Gastrocnemius medialis (tissue), 4 donors: ENCODE measurements at regions of chr12 and their contacts with region 1.

Region 1: DNA sequence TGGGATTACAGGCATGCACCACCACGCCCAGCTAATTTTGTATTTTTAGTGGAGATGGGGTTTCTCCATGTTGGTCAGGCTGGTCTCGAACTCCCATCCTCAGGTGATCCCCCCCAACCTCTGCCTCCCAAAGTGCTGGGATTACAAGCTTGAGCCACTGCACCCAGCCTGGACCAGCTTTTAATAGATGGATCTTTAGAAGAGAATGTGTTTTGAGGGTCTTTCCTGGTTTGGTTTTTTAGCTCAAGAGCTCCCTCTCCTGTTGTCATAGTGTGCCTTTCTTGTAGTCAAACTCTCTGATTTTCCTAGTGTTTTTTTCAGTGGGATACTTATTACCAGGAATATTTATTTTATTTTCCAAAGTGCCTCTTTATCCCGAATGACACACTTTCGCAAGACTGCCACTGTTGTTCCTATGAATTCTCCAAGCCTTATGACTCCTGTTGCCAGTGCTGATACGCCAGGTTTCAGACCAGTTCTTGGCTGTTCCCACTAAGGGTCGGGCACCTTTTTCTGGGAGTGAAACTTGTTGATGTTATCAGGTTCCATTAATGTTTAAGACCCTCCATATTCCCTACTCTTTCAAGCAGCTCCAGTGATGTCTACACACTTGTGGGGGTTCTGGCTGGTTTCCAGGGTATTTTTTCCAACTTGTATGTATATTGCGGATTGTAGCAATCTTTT is 31.5 kb upstream of the LIMA1 start:
- DNase-seq: no peak
- ATAC-seq: no peak
- H3K4me3 ChIP-seq: no peak overlapping the region
- H3K27ac ChIP-seq: no peak overlapping the region
- H3K4me1 ChIP-seq: peaks cover 0 to 12% of the 10 kb centered on the region in 2 donors
- H3K27me3 ChIP-seq: no peaks in the 10 kb centered on the region
- CTCF ChIP-seq: peak; percentile 25 to 57 (median 43)
- POLR2A ChIP-seq: no peak

Region 2: DNA sequence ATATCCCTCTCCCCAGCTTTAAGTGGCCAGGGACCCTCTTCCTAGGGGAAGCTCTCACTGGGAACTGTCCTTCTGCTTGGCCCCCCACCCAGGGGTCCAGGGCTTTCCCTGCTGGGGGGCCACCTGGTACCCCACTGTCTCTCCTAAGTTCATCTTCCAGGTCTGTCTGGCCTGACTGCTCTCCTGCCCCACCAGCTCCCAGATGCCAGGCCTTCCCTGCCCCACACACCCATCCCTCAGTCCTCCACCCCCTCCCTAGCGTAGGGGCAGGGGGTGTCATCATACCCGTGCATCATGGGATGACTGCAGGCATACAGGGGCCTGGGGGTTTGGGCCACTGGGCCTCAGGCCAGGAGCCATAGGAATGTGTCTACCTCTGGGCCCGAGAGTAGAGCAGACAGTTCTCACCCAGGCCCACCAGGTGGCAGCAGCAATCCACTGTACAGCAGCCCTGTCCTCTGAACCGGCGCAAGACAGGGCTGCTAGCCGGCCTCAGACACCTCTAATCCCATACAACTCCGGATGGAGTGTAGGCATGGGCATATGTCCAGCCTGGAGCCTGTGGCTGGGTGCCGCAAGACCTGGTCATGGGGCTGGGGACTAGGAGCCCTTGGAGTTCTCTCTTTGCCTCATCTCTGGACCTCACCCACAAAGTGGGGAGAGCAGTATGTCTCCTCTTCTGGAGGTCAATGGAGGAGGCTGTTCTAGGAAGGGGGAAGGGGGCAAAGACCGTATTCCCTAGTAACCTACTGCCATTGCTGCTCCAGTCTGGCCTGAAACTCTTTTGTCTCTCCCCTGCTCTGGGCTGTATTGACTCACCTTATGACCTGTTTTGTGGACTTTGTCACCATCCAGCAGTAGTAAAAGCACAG is 239.6 kb before region 1 on chr12:
- in situ Hi-C with region 1: loop called in 3 of 4 experiments (anchors 10 to 25 kb)
- intact Hi-C with region 1: loop called (anchors 10 kb)
- DNase-seq: peak; percentile 62 to 77
- ATAC-seq: peak; percentile 88 to 89
- H3K4me3 ChIP-seq: no peak overlapping the region
- H3K27ac ChIP-seq: no peak overlapping the region
- H3K4me1 ChIP-seq: peaks cover 0 to 3% of the 10 kb centered on the region in 2 donors
- H3K27me3 ChIP-seq: no peaks in the 10 kb centered on the region
- CTCF ChIP-seq: peak; percentile 94 to 97 (median 95)
- POLR2A ChIP-seq: no peak

Region 3: GRCh38 chr12:50084775-50085614 is 229.8 kb before region 1 on chr12 and contains the start of gene SMARCD1:
- in situ Hi-C with region 1: loop called in 2 of 4 experiments (anchors 25 kb)
- intact Hi-C with region 1: loop called (anchors 10 kb)
- DNase-seq: peak; percentile 86 to 88
- ATAC-seq: peak; percentile 81 to 91
- H3K4me3 ChIP-seq: peak within 1 kb of the TSS; percentile 81 to 95 (median 88)
- H3K27ac ChIP-seq: peak within 1 kb of the TSS; percentile 92 to 99 (median 96)
- H3K4me1 ChIP-seq: peaks cover 13 to 14% of the 10 kb centered on the region in 2 donors
- H3K27me3 ChIP-seq: no peaks in the 10 kb centered on the region
- CTCF ChIP-seq: peak in 2 of 5 experiments; percentile 26 to 41
- POLR2A ChIP-seq: peak in 1 of 2 donors; percentile 37
- total RNA-seq, gene SMARCD1: 16.9 to 27.3 (median 20.1) TPM

Region 4: DNA sequence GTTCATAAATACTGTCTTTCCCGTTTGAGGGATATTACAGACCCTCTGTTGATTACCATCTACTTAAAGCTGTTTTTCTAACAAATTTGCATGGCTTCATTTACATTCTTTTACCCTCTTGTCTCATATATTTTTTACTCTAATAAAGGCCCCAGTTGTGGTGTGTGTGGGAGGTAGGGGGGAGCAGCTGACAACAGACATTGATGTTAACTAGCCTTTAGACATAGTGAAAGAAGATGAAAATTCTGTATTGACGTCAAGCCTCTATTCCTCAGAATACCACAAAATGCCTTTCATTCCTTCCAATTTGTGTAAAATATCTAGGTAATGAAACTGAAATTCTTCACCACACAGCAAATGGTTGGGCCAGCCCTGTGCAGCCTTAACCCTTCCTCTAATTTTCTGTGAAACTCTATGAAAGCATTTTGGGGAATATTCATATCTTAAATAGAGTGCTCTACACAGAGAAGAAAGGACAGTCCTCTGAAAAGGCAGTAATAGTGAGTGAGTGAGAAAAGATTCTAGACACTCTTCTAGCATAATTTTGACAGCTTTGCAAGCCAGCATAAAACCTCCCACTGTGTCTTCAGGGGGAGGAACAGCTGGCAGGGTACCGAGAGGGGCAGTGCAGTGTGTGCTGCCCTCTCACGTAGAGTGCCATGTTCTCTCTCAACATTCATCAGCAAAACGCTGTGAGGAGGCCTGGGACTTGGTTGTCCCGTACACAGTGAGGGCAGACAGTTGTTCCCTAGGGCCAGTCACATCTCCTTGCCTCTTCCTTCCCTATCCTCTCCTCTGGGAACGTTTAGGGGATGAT is 127.5 kb before region 1 on chr12:
- in situ Hi-C with region 1: no loop called
- intact Hi-C with region 1: loop called (anchors 5 kb)
- DNase-seq: no peak
- ATAC-seq: no peak
- H3K4me3 ChIP-seq: no peak overlapping the region
- H3K27ac ChIP-seq: peak overlapping the region; percentile 1 to 35 (median 16)
- H3K4me1 ChIP-seq: peaks cover 5 to 22% of the 10 kb centered on the region in 2 donors
- H3K27me3 ChIP-seq: no peaks in the 10 kb centered on the region
- CTCF ChIP-seq: no peak
- POLR2A ChIP-seq: no peak

Region 5: GRCh38 chr12:50222275-50222795 is 92.4 kb before region 1 on chr12:
- in situ Hi-C with region 1: no loop called
- intact Hi-C with region 1: loop called (anchors 5 kb)
- DNase-seq: peak; percentile 39 to 45
- ATAC-seq: peak; percentile 61 to 73
- H3K4me3 ChIP-seq: peak overlapping the region; percentile 45 to 54 (median 46)
- H3K27ac ChIP-seq: peak overlapping the region; percentile 60 to 78 (median 76)
- H3K4me1 ChIP-seq: peaks cover 19 to 29% of the 10 kb centered on the region in 2 donors
- H3K27me3 ChIP-seq: no peaks in the 10 kb centered on the region
- CTCF ChIP-seq: peak in 1 of 5 experiments; percentile 27
- POLR2A ChIP-seq: peak; percentile 16 to 29

Region 6: GRCh38 chr12:50344775-50345174 is 30.0 kb after region 1 on chr12:
- in situ Hi-C with region 1: no loop called
- intact Hi-C with region 1: no loop called
- DNase-seq: no peak
- ATAC-seq: no peak
- H3K4me3 ChIP-seq: no peak overlapping the region
- H3K27ac ChIP-seq: no peak overlapping the region
- H3K4me1 ChIP-seq: no peaks in the 10 kb centered on the region
- H3K27me3 ChIP-seq: no peaks in the 10 kb centered on the region
- CTCF ChIP-seq: no peak
- POLR2A ChIP-seq: no peak

Region 7: DNA sequence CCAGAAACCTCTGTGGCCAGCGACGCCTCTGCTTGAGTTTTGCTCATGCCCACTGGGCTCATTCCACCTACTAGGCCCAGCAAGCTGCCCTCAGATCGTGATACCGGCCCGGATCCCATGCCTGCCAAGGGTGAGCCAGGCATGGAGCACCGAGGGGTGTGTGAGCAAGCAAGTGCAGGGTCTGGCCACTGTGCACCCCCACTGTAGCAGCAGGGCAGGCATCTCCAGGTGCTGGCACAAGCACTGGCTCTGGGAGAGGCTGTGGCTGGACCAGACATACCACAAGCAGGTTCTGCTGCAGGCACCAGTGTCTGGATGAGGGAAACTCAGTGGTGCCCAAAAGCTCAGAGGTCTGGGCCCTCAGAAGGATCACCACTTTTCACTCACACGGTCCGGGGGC is 61.0 kb after region 1 on chr12:
- in situ Hi-C with region 1: no loop called
- intact Hi-C with region 1: no loop called
- DNase-seq: no peak
- ATAC-seq: no peak
- H3K4me3 ChIP-seq: no peak overlapping the region
- H3K27ac ChIP-seq: no peak overlapping the region
- H3K4me1 ChIP-seq: no peaks in the 10 kb centered on the region
- H3K27me3 ChIP-seq: no peaks in the 10 kb centered on the region
- CTCF ChIP-seq: no peak
- POLR2A ChIP-seq: no peak